ENCODE measurements at regions of chr12 and their contacts with region 1.

Region 1: DNA sequence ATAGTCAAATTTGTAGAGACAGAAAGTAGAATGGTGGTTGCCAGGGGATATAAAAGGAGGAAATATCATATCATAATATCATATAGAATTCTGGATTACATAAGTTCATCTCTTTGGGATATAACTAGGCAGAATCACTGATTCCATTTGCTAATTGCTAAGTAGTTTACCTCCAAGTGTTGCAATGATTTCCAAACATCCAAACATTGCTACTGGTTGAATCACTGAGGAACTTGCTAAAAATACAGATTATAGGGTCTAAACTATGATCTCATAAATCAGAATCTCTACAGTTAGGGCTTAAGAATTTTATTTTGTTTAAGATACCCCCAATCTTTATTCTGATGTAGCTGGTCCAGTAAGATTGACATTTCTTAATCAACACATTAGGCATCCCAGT is 16.1 kb upstream of the TAS2R42 start:
- DNase-seq: no peak
- ATAC-seq: no peak
- H3K4me3 ChIP-seq: no peak overlapping the region
- H3K27ac ChIP-seq: no peak overlapping the region
- H3K4me1 ChIP-seq: no peaks in the 10 kb centered on the region
- CTCF ChIP-seq: no peak
- EP300 ChIP-seq: no peak
- POLR2A ChIP-seq: no peak
- RAD21 ChIP-seq: no peak

Region 2: DNA sequence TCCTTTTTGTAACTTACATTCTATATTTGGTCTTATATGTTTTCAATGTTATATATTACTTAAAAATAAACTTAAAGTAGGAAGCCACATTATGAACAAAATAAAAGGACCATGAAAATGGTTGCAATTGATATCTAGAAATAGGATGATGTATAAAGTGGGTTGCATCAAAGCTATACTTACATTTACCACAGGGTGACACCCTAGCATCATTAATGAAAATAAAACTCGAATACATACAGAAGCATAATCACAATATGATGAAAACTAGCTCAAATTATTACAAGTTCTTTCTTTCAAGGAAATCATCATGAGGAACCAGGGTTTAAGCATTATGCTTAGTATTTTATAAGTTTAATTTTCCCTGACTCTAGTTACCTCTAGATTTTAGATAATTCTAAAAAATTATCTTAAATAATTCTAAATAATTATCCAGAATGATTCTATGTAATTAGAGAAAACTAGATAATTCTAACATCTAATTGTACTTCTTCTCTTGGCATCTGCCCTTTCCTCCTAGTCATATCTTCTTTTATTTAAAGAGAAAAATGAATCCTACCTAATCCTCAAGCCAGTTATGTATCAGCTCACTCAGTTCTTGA is 431.6 kb before region 1 on chr12:
- CTCF ChIA-PET with region 1: interaction called, 52 read pairs
- POLR2A ChIA-PET with region 1: no interaction called
- DNase-seq: peak; percentile 15 to 44
- ATAC-seq: peak; percentile 68 to 69; a peak in 3 of 6 replicates
- H3K4me3 ChIP-seq: no peak overlapping the region
- H3K27ac ChIP-seq: no peak overlapping the region
- H3K4me1 ChIP-seq: no peaks in the 10 kb centered on the region
- CTCF ChIP-seq: peak; percentile 79
- EP300 ChIP-seq: no peak
- POLR2A ChIP-seq: no peak
- RAD21 ChIP-seq: peak; percentile 87 to 89

Measured in A549 (cell line).